ENCODE measurements at regions of chr12 and their contacts with region 1.

Region 1: GRCh38 chr12:17778242-17778641 is 311.8 kb downstream of the RERGL start:
- DNase-seq: no peak
- H3K4me3 ChIP-seq: no peak overlapping the region
- H3K4me1 ChIP-seq: no peaks in the 10 kb centered on the region
- H3K27me3 ChIP-seq: no peaks in the 10 kb centered on the region

Region 2: GRCh38 chr12:17866802-17867201 is 88.6 kb after region 1 on chr12:
- in situ Hi-C with region 1: loop called (anchors 10 kb)
- DNase-seq: no peak
- H3K4me3 ChIP-seq: no peak overlapping the region
- H3K4me1 ChIP-seq: no peaks in the 10 kb centered on the region
- H3K27me3 ChIP-seq: no peaks in the 10 kb centered on the region